ENCODE measurements at regions of chr3 and their contacts with region 1.

Region 1: DNA sequence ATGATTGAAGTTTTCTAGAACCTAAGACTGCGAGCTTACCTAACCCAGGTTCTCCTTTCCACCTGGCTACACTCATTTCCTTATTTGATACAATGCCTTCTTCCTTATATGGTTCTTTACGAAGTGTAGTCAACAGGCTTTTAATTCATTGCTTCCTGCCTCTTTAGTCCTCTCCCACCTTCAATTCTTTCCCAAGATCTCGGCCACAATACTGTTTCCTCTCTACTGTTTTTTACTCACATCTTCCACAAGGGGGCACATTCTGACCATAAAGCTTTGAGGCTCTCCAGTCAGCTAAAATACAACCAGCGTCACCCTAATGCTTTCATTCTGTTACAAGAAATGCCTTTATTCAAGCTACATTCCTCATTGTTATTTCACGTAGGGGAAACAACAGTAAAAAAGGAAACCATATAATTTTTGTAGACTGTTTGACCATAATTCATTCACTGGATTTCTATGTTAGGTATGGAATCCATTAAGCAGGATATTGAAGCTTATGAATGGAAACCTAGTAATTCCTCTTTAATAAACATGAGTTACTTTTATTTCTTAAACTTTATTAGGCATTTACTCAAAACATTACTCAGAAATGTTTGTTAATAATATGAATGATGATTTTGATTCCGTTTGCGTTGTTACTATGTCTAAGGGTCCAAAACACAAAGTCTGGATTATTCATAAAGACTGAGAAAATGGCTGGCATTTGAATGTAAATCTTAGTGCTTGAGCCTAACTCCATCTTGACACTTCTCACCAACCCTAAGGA is 29.5 kb upstream of the VEPH1 start:
- DNase-seq: no peak
- ATAC-seq: peak; percentile 88
- H3K4me3 ChIP-seq: no peak overlapping the region
- H3K27ac ChIP-seq: no peak overlapping the region
- H3K4me1 ChIP-seq: no peaks in the 10 kb centered on the region
- H3K27me3 ChIP-seq: no peaks in the 10 kb centered on the region

Region 2: GRCh38 chr3:157493627-157494550 is 38.8 kb before region 1 on chr3:
- intact Hi-C with region 1: no loop called
- DNase-seq: no peak
- ATAC-seq: peak; percentile 61
- H3K4me3 ChIP-seq: no peak overlapping the region
- H3K27ac ChIP-seq: no peak overlapping the region
- H3K4me1 ChIP-seq: no peaks in the 10 kb centered on the region
- H3K27me3 ChIP-seq: no peaks in the 10 kb centered on the region

Region 3: GRCh38 chr3:157572559-157573270 is 40.0 kb after region 1 on chr3:
- intact Hi-C with region 1: loop called (anchors 1 to 5 kb)
- DNase-seq: no peak
- ATAC-seq: no peak
- H3K4me3 ChIP-seq: no peak overlapping the region
- H3K27ac ChIP-seq: no peak overlapping the region
- H3K4me1 ChIP-seq: no peaks in the 10 kb centered on the region
- H3K27me3 ChIP-seq: no peaks in the 10 kb centered on the region

Region 4: GRCh38 chr3:158434412-158435038 is 901.8 kb after region 1 on chr3:
- intact Hi-C with region 1: loop called in 1 of 2 experiments (anchors 10 kb)
- DNase-seq: peak in 1 of 2 donors; percentile 47
- ATAC-seq: no peak
- H3K4me3 ChIP-seq: no peak overlapping the region
- H3K27ac ChIP-seq: no peak overlapping the region
- H3K4me1 ChIP-seq: no peaks in the 10 kb centered on the region
- H3K27me3 ChIP-seq: no peaks in the 10 kb centered on the region